HEK293T (cell line): ENCODE measurements at regions of chr4 and their contacts with region 1.

Region 1: GRCh38 chr4:77600521-77601451 is 4.8 kb upstream of the CXCL13 start:
- DNase-seq: peak; percentile 59

Region 2: GRCh38 chr4:77225022-77225421 is 375.8 kb before region 1 on chr4:
- CTCF ChIA-PET with region 1: no interaction called
- POLR2A ChIA-PET with region 1: no interaction called
- DNase-seq: no peak

Region 3: DNA sequence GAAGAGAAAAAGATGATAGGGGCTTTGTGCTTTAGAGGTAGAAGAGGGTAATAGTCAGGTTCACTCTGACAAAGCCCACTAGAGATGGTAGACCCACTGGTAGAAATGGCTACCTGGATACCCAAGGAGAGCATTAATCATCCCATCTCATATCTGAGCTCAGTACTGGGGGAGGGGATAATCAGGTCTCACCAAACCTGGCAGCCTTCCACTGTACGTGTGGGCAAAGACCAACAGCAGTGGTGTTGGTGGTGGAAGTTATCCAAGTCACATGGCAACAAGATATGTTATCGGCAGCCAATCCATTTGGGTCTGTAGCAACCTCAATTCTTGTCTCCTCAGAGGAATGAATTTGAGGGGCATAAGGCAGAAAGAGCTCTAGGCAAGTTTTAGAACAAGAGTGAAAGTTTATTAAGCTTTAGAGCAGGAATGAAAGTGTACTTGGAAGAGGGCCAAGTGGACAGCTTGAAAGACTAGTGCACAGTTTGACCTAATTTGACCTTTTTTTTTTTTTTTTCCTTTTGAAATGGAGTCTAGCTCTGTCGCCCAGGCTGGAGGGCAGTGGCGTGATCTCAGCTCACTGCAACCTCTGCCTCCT is 62.1 kb before region 1 on chr4:
- CTCF ChIA-PET with region 1: interaction called, 10 read pairs
- POLR2A ChIA-PET with region 1: no interaction called
- DNase-seq: no peak